Activated naive CD4-positive, alpha-beta T cell treated with anti-CD3 and anti-CD28 coated beads for 36 hours (primary cell): ENCODE measurements at regions of chr1 and their contacts with region 1.

Region 1: GRCh38 chr1:37474046-37474759 is at the start of gene ZC3H12A:
- DNase-seq: peak; percentile 89
- H3K4me3 Mint-ChIP-seq: peak within 1 kb of the TSS; percentile 87
- H3K27ac Mint-ChIP-seq: peak within 1 kb of the TSS; percentile 99
- H3K4me1 Mint-ChIP-seq: peaks cover 33% of the 10 kb centered on the region
- H3K27me3 Mint-ChIP-seq: no peaks in the 10 kb centered on the region
- total RNA-seq, gene ZC3H12A: 29.0 to 33.6 TPM

Region 2: GRCh38 chr1:37423810-37424209 is 50.4 kb before region 1 on chr1:
- CTCF ChIA-PET with region 1: no interaction called
- intact Hi-C with region 1: no loop called
- DNase-seq: no peak
- H3K4me3 Mint-ChIP-seq: no peak overlapping the region
- H3K27ac Mint-ChIP-seq: no peak overlapping the region
- H3K4me1 Mint-ChIP-seq: no peaks in the 10 kb centered on the region
- H3K27me3 Mint-ChIP-seq: peaks cover 13% of the 10 kb centered on the region

Region 3: GRCh38 chr1:37455516-37455915 is 18.7 kb before region 1 on chr1:
- CTCF ChIA-PET with region 1: interaction called, 13 read pairs
- intact Hi-C with region 1: no loop called
- DNase-seq: no peak
- H3K4me3 Mint-ChIP-seq: no peak overlapping the region
- H3K27ac Mint-ChIP-seq: no peak overlapping the region
- H3K4me1 Mint-ChIP-seq: peaks cover 5% of the 10 kb centered on the region
- H3K27me3 Mint-ChIP-seq: no peaks in the 10 kb centered on the region

Region 4: GRCh38 chr1:37995751-37996345 is 521.6 kb after region 1 on chr1:
- CTCF ChIA-PET with region 1: no interaction called
- intact Hi-C with region 1: loop called (anchors 10 kb)
- DNase-seq: peak; percentile 68
- H3K4me3 Mint-ChIP-seq: peak overlapping the region; percentile 48
- H3K27ac Mint-ChIP-seq: peak overlapping the region; percentile 66
- H3K4me1 Mint-ChIP-seq: peaks cover 37% of the 10 kb centered on the region
- H3K27me3 Mint-ChIP-seq: no peaks in the 10 kb centered on the region

Region 5: GRCh38 chr1:38012363-38013226 is 538.4 kb after region 1 on chr1 and contains the start of gene UTP11:
- CTCF ChIA-PET with region 1: no interaction called
- intact Hi-C with region 1: loop called (anchors 2 kb)
- DNase-seq: peak; percentile 96
- H3K4me3 Mint-ChIP-seq: peak within 1 kb of the TSS; percentile 98
- H3K27ac Mint-ChIP-seq: peak within 1 kb of the TSS; percentile 95
- H3K4me1 Mint-ChIP-seq: peaks cover 55% of the 10 kb centered on the region
- H3K27me3 Mint-ChIP-seq: no peaks in the 10 kb centered on the region
- total RNA-seq, gene UTP11: 49.7 to 49.8 TPM